Activated CD4-positive, alpha-beta T cell treated with anti-CD3 and anti-CD28 coated beads, Interleukin-2, amount 10 ng/mL, durations not matched to agents 24 days and 14 days (primary cell): ENCODE measurements at regions of chr14 and their contacts with region 1.

Region 1: DNA sequence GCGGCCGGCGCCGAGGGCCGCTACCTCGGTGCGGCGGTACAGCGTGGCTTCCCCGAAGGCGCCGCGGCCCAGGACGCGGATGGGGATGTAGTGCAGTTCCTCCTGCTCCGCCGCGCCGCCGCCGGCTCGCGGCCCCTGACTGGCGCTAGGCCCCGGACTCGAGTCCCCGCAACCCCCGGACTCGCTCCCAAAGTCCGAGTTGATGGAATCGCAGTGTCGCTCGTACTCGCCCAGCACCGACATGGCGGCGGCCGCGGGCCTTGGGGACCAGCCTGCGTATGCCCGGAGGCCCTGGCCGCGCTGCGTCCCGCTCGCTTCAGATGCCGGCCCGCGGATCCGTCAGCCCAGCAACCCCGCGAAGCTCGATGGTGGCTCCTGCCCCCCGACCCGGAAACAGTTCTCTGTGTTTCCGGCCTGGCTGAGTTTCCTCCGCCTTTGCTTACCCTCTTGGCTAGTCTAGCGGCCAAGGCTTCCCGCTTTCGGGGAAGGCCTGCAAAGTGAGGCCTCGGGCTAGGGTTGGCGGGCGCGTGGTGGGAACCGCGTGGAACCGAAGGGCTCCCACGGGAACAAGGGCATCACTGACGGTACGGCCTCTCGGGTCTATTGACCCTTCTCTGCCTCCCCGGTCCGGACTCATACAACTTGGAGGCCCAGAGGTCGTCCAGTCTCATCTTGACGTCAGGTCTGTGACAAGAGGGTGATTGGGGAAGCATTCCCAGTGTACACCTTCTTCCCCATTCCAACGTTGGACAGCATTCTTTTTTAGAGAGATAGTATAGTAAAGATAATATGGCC is at the start of gene NEK9:
- DNase-seq: peak; percentile 97
- H3K4me3 Mint-ChIP-seq: peak within 1 kb of the TSS; percentile 97
- H3K27ac Mint-ChIP-seq: peak within 1 kb of the TSS; percentile 98
- H3K4me1 Mint-ChIP-seq: peaks cover 32% of the 10 kb centered on the region
- H3K27me3 Mint-ChIP-seq: no peaks in the 10 kb centered on the region
- total RNA-seq, gene NEK9: 66.6 and 68.8 TPM in 2 replicates

Region 2: GRCh38 chr14:75063407-75064213 is 63.3 kb before region 1 on chr14 and contains the start of gene ACYP1:
- intact Hi-C with region 1: loop called (anchors 2 kb)
- DNase-seq: peak; percentile 98
- H3K4me3 Mint-ChIP-seq: peak within 1 kb of the TSS; percentile 100
- H3K27ac Mint-ChIP-seq: peak within 1 kb of the TSS; percentile 97
- H3K4me1 Mint-ChIP-seq: peaks cover 33% of the 10 kb centered on the region
- H3K27me3 Mint-ChIP-seq: no peaks in the 10 kb centered on the region
- total RNA-seq, gene ACYP1: 45.2 and 46.0 TPM in 2 replicates

Region 3: GRCh38 chr14:75293920-75294642 is 167.2 kb after region 1 on chr14:
- intact Hi-C with region 1: loop called (anchors 1 kb)
- DNase-seq: peak; percentile 98
- H3K4me3 Mint-ChIP-seq: peak overlapping the region; percentile 88
- H3K27ac Mint-ChIP-seq: peak overlapping the region; percentile 95
- H3K4me1 Mint-ChIP-seq: peaks cover 18% of the 10 kb centered on the region
- H3K27me3 Mint-ChIP-seq: peaks cover 20% of the 10 kb centered on the region

Region 4: DNA sequence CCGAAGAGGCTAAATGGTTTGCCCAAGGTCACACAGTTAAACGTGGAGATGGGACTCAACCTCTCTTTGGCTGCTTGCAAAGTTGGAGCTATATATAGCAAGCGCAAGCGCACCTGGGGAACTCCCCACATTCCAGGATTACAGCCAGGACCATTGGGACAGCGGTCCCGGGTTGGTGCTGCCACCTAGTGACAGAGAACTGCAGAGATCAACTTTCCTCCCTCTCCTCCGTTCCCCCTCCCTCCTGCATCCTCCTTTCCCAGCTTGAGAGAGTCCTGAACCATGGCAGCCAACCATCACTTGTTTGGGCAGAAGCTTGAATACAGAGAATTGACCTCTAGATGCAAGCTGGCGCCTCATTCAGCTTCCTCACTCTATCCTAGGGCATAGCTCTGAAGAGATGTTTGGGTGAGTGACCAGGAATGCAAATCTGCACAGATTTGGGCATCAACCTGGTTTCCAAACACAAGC is 434.1 kb after region 1 on chr14:
- intact Hi-C with region 1: loop called (anchors 5 kb)
- DNase-seq: peak; percentile 84
- H3K4me3 Mint-ChIP-seq: peak overlapping the region; percentile 63
- H3K27ac Mint-ChIP-seq: peak overlapping the region; percentile 98
- H3K4me1 Mint-ChIP-seq: peaks cover 61% of the 10 kb centered on the region
- H3K27me3 Mint-ChIP-seq: no peaks in the 10 kb centered on the region

Region 5: DNA sequence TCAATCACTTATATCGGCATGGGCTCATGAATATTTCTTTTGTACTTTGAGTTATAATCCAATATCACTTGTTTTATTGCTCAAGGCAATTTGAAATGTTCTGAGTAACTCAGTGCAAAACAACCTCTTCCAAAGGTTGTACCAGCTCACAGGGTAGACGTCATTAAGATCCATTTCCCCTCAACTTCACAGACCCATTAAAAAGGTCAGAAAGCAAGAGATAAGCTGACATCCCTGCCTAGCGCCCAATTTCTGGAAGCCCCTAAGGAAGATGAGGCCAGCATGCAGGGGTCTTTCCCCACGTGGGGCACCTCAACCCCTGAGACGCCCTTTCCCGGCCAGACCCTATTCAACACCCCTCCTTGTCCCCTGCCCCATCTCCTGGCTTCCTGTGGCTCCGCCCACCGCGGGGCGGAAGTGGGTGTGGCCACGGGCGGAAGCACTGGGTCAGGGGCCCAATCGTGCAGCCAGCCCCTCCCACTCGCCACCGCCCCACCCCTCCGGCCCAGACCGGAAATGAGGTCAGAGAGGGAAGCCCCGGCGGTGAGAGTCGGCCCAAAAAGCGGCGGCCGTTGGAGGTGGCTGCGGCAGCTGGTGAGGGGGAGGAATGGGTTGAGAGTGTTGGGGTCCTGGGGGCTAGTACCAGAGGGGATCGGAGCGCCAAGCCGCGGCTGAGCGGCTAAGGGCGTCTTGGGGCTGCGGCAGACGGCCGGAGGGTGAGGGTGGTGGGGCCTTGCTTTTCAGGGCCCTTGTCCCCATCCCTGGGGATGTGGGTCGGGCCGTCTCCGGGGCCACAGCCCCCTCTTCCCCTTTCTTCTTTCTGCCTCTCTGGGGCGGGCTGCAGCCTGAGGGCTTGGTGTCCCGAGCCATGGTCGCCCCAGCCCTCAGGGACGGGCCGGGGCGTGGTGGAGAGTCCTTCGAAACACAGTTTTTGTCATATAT is 1024.8 kb after region 1 on chr14 and contains the start of gene GPATCH2L:
- intact Hi-C with region 1: loop called (anchors 10 kb)
- DNase-seq: peak; percentile 99
- H3K4me3 Mint-ChIP-seq: peak within 1 kb of the TSS; percentile 88
- H3K27ac Mint-ChIP-seq: peak within 1 kb of the TSS; percentile 99
- H3K4me1 Mint-ChIP-seq: peaks cover 44% of the 10 kb centered on the region
- H3K27me3 Mint-ChIP-seq: peaks cover 5% of the 10 kb centered on the region
- total RNA-seq, gene GPATCH2L: 60.6 and 61.6 TPM in 2 replicates